WTC11 (cell line): ENCODE measurements at regions of chr1 and their contacts with region 1.

Region 1: DNA sequence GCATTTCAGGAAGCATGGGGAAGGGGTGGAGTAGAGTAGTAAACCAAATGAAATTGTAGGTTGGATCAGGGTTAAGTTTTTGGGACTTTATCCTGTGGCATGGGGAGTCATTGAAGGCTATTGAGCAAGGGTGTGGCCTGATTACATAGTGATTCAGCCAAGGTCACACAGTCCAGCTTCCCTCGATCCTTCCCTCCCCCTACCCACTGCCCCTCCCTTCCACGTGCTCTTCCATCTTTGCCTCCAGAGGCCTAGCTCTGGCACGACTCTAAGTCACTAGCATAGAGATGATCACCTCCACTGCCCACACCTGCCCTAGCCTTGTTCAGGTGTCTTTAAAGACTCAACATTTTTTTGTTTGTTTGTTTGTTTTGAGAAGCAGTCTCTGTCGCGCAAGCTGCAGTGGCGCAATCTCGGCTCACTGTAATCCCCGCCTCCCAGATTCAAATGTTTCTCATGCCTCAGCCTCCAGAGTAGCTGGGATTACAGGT is 37.2 kb upstream of the SLC9A1 start:
- DNase-seq: no peak
- ATAC-seq: no peak
- H3K4me3 Mint-ChIP-seq: no peak overlapping the region
- H3K27ac Mint-ChIP-seq: no peak overlapping the region
- H3K4me1 Mint-ChIP-seq: no peaks in the 10 kb centered on the region
- H3K27me3 Mint-ChIP-seq: peaks cover 2% of the 10 kb centered on the region; the same call in 1 of the 2 replicates
- CTCF ChIP-seq: no peak

Region 2: GRCh38 chr1:27087371-27088220 is 104.5 kb before region 1 on chr1:
- CTCF ChIA-PET with region 1: no interaction called
- POLR2A ChIA-PET with region 1: no interaction called
- DNase-seq: no peak
- ATAC-seq: no peak
- H3K4me3 Mint-ChIP-seq: no peak overlapping the region
- H3K27ac Mint-ChIP-seq: no peak overlapping the region
- H3K4me1 Mint-ChIP-seq: peaks cover 6% of the 10 kb centered on the region; the same call in 1 of the 2 replicates
- H3K27me3 Mint-ChIP-seq: peaks cover 8% of the 10 kb centered on the region
- CTCF ChIP-seq: no peak

Region 3: GRCh38 chr1:27102707-27103491 is 89.2 kb before region 1 on chr1:
- CTCF ChIA-PET with region 1: interaction called, 24 read pairs
- POLR2A ChIA-PET with region 1: no interaction called
- DNase-seq: peak; percentile 95
- ATAC-seq: peak; percentile 84
- H3K4me3 Mint-ChIP-seq: no peak overlapping the region
- H3K27ac Mint-ChIP-seq: no peak overlapping the region
- H3K4me1 Mint-ChIP-seq: peaks cover 29% of the 10 kb centered on the region
- H3K27me3 Mint-ChIP-seq: no peaks in the 10 kb centered on the region; the same call in 1 of the 2 replicates
- CTCF ChIP-seq: peak; percentile 99

Region 4: GRCh38 chr1:27179379-27179778 is 12.7 kb before region 1 on chr1:
- CTCF ChIA-PET with region 1: no interaction called
- POLR2A ChIA-PET with region 1: no interaction called
- DNase-seq: no peak
- ATAC-seq: no peak
- H3K4me3 Mint-ChIP-seq: no peak overlapping the region
- H3K27ac Mint-ChIP-seq: no peak overlapping the region
- H3K4me1 Mint-ChIP-seq: no peaks in the 10 kb centered on the region
- H3K27me3 Mint-ChIP-seq: peaks cover 14% of the 10 kb centered on the region
- CTCF ChIP-seq: no peak